WTC11 (cell line): ENCODE measurements at regions of chr2 and their contacts with region 1.

Region 1: GRCh38 chr2:157336137-157337010 is 10.8 kb upstream of the ERMN start:
- DNase-seq: peak; percentile 22
- ATAC-seq: peak; percentile 72
- H3K4me3 Mint-ChIP-seq: no peak overlapping the region
- H3K27ac Mint-ChIP-seq: no peak overlapping the region
- H3K4me1 Mint-ChIP-seq: peaks cover 16% of the 10 kb centered on the region
- H3K27me3 Mint-ChIP-seq: no peaks in the 10 kb centered on the region
- CTCF ChIP-seq: peak; percentile 78

Region 2: DNA sequence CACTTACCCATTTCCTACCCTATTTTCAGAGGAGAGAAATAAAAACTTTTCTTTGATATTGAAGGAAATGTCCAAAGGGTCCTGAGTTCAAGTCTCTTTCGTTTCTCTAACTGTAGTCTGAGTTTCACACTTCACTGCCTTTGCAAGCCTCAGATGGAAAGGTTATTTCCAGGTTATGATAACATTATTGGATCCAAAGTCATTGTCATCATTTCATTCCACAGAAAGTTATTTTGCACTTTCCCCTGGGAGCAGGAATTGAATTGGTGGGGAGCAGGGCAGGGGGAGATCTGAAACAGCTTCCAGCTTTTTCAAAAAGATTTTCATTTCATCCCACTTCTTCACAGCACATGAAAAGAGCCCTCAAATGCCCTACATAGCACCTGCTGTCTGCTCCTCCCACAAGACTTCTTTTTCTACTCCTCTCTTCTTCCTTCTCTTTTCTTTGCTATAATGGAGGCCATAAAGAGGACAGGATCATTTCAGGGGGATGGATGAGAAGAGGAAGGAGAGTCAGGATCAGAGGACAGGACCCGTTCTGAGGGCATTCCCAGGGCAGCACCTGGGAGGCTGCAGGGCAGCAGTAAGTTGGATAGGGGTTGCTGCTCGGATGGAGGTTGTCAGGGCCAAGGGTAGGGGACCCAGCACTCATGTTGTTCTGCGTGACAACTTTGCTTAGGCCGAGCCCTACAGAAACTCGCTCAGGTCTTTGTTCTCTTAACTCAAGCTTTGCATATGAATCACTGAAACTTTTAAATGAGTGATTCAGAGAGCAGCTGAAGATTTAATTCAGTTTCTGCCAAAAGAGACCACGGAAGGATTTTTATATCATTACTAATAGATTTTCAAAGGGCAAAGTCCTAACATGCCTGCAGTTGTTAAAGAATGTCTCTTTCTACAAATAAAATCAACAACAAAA is 90.3 kb before region 1 on chr2:
- CTCF ChIA-PET with region 1: no interaction called
- POLR2A ChIA-PET with region 1: no interaction called
- DNase-seq: peak; percentile 23
- ATAC-seq: peak; percentile 95
- H3K4me3 Mint-ChIP-seq: peak overlapping the region; percentile 26
- H3K27ac Mint-ChIP-seq: peak overlapping the region; percentile 92
- H3K4me1 Mint-ChIP-seq: peaks cover 37% of the 10 kb centered on the region
- H3K27me3 Mint-ChIP-seq: no peaks in the 10 kb centered on the region
- CTCF ChIP-seq: no peak

Region 3: GRCh38 chr2:157318884-157319283 is 17.5 kb before region 1 on chr2:
- CTCF ChIA-PET with region 1: interaction called, 15 read pairs
- POLR2A ChIA-PET with region 1: no interaction called
- DNase-seq: no peak
- ATAC-seq: no peak
- H3K4me3 Mint-ChIP-seq: no peak overlapping the region
- H3K27ac Mint-ChIP-seq: no peak overlapping the region
- H3K4me1 Mint-ChIP-seq: peaks cover 44% of the 10 kb centered on the region
- H3K27me3 Mint-ChIP-seq: no peaks in the 10 kb centered on the region
- CTCF ChIP-seq: no peak

Region 4: DNA sequence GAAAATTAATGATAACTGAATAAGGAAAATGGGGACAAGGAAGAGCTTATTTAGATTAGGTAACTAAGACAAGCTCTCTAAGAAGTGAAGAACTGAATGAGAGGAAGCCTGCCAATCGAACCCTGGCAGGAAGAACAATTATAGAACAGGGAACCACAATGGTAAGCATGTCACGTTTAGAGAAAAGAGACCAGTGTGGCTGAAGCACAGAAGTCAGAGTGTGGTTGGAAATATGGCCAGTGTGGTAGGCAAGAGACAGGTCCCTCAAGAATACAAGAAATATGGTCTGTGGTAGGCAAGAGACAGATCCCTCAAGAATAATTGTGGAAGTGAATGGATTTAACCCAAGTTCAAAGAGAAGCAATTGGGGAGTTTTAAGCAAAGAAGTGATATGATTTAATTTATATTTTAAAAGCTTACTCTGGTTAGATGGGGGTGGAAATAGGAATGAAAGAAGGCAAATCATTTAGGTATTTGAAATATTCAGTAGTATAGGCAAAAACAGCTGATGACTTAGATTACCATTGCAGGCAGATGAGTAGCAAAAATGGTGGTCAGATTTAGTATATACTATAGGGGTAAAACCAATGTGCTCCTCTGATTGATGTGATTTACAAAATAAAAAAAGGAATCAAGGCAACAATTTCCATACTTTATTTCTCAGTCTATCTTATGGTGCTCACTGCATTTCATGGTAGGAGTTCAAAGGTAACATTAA is 28.0 kb after region 1 on chr2:
- CTCF ChIA-PET with region 1: interaction called, 10 read pairs
- POLR2A ChIA-PET with region 1: no interaction called
- DNase-seq: no peak
- ATAC-seq: no peak
- H3K4me3 Mint-ChIP-seq: no peak overlapping the region
- H3K27ac Mint-ChIP-seq: no peak overlapping the region
- H3K4me1 Mint-ChIP-seq: peaks cover 9% of the 10 kb centered on the region
- H3K27me3 Mint-ChIP-seq: no peaks in the 10 kb centered on the region
- CTCF ChIP-seq: no peak